Heart right ventricle (tissue), 16 donors: ENCODE measurements at regions of chr16 and their contacts with region 1.

Region 1: DNA sequence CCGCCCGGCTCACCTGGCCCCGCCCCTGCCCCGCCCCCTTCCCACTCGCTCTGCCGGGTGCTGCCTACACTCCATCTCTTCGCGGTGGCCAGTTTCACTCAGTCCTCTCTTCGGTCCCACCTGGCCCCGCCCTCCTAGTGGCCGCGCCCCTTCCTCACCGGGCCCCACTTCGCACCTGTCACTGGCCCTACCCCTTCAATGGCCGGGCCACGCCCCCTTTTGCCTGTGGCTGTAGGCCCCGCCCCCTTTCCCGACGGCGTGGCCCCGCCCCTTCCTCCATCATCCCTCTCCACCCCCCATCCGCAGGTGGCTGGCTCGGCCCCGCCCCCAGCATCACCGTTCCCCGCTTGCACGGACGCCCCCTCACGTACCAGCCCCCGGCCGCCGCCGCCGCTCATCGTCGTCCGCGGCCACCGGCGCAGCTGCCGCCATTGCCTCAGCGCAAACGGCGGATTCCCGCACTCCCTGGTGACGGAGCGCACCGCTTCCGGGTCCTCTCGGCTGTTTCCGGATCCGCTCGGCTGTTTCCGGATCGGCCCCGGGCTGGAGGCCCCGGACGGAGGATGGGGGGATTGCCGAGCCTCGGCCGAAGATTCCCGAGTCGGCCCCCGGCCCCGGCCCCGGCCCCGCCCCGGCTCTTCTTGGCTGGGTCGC is at the start of gene RABEP2:
- DNase-seq: peak; percentile 93 to 97
- ATAC-seq: peak; percentile 93 to 96 (median 95)
- H3K4me3 ChIP-seq: peak within 1 kb of the TSS; percentile 42 to 92 (median 86)
- H3K27ac ChIP-seq: peak within 1 kb of the TSS; percentile 89 to 100 (median 99)
- H3K4me1 ChIP-seq: peaks cover 2 to 20% (median 11%) of the 10 kb centered on the region in 9 donors
- H3K27me3 ChIP-seq: no peaks in the 10 kb centered on the region
- CTCF ChIP-seq: no peak
- total RNA-seq, gene RABEP2: 11.8 to 20.0 (median 15.5) TPM

Region 2: GRCh38 chr16:28481986-28482385 is 442.9 kb before region 1 on chr16:
- intact Hi-C with region 1: loop called in 1 of 10 experiments (anchors 10 kb)
- DNase-seq: no peak
- ATAC-seq: no peak
- H3K4me3 ChIP-seq: no peak overlapping the region
- H3K27ac ChIP-seq: no peak overlapping the region
- H3K4me1 ChIP-seq: no peaks in the 10 kb centered on the region
- H3K27me3 ChIP-seq: no peaks in the 10 kb centered on the region
- CTCF ChIP-seq: no peak

Region 3: GRCh38 chr16:28823872-28824716 is 100.8 kb before region 1 on chr16:
- intact Hi-C with region 1: loop called in 3 of 10 experiments (anchors 5 to 10 kb)
- DNase-seq: peak; percentile 97 to 99
- ATAC-seq: peak; percentile 92 to 97 (median 95)
- H3K4me3 ChIP-seq: peak overlapping the region; percentile 79 to 100 (median 100)
- H3K27ac ChIP-seq: peak overlapping the region; percentile 92 to 100 (median 100)
- H3K4me1 ChIP-seq: peaks cover 8 to 34% (median 23%) of the 10 kb centered on the region in 9 donors
- H3K27me3 ChIP-seq: no peaks in the 10 kb centered on the region
- CTCF ChIP-seq: peak in 7 of 9 donors; percentile 24 to 49 (median 39)

Region 4: GRCh38 chr16:28879841-28880588 is 44.8 kb before region 1 on chr16:
- intact Hi-C with region 1: loop called in 2 of 10 experiments (anchors 10 kb)
- DNase-seq: peak; percentile 89
- ATAC-seq: peak; percentile 87 to 96 (median 95)
- H3K4me3 ChIP-seq: peak overlapping the region; percentile 48 to 99 (median 78)
- H3K27ac ChIP-seq: peak overlapping the region in 1 of 10 donors; percentile 65
- H3K4me1 ChIP-seq: peaks cover 0 to 16% (median 13%) of the 10 kb centered on the region in 9 donors
- H3K27me3 ChIP-seq: peaks cover 0 to 23% (median 5%) of the 10 kb centered on the region in 7 donors
- CTCF ChIP-seq: peak in 4 of 9 donors; percentile 15 to 39 (median 22)

Region 5: GRCh38 chr16:28950648-28951409 is 26.0 kb after region 1 on chr16 and contains the start of gene NFATC2IP:
- intact Hi-C with region 1: loop called in 2 of 10 experiments (anchors 1 to 2 kb)
- DNase-seq: peak; percentile 99 to 100
- ATAC-seq: peak; percentile 97 to 100 (median 98)
- H3K4me3 ChIP-seq: peak within 1 kb of the TSS; percentile 75 to 99 (median 92)
- H3K27ac ChIP-seq: peak within 1 kb of the TSS; percentile 19 to 94 (median 90)
- H3K4me1 ChIP-seq: peaks cover 6 to 23% (median 16%) of the 10 kb centered on the region in 9 donors
- H3K27me3 ChIP-seq: no peaks in the 10 kb centered on the region
- CTCF ChIP-seq: no peak
- total RNA-seq, gene NFATC2IP: 13.8 to 22.5 (median 17.0) TPM